Ascending aorta (tissue), 2 donors: ENCODE measurements at regions of chr4 and their contacts with region 1.

Region 1: GRCh38 chr4:82373816-82374625 is at the start of gene HNRNPD:
- DNase-seq: peak; percentile 95 to 99
- H3K4me3 ChIP-seq: peak within 1 kb of the TSS; percentile 89 to 99
- H3K27ac ChIP-seq: peak within 1 kb of the TSS; percentile 99
- H3K4me1 ChIP-seq: peaks cover 7 to 18% of the 10 kb centered on the region in 2 donors
- H3K27me3 ChIP-seq: no peaks in the 10 kb centered on the region
- CTCF ChIP-seq: no peak
- total RNA-seq, gene HNRNPD: 102 TPM

Region 2: DNA sequence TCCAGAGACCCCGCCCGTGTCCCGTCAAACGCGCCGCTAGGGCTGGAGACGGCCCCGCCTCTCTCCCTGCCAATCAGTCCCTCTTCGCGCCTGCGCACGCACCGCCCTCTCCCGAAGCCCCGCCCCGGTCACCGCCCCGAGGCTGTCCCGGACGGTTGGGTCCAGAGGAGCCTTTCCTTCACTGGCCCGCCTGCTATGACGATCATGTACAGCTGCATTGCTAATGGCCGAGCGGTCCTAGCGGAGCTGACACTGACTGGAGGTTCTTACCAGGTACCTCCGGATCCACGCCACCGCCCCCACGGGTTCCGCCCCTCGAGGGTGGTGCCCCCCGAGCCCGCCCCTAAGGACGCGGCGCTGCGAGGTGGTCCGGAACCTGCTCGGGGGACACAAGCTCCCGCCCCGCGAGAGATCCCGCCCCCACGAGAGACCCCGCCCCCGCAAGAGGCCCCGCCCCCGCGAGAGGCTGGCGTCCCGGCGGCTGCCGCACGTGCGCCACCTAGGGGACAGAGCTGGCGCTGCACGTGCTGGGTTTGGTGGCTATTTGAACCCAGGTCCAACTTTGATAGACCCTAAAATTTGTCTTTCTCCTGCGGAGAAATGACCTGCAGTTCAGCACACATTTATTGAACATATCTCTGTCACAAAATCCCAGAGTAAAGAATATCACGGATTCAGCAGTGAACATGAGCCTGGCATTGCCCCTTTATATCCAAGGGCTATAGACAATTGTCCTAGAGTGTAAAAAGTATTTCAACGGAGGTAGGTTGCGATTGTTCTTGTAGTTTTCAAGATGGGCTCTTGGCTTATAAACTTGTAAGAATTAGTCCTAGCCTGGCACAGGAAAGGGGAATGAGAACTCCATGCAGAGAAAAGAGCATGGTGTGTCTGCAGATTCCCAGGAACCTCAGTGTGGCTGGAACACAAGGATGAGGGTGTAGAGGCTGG is 88.9 kb before region 1 on chr4:
- intact Hi-C with region 1: loop called (anchors 1 kb)
- DNase-seq: peak; percentile 99 to 100
- H3K4me3 ChIP-seq: peak overlapping the region; percentile 53 to 58
- H3K27ac ChIP-seq: peak overlapping the region; percentile 58 to 66
- H3K4me1 ChIP-seq: peaks cover 0 to 5% of the 10 kb centered on the region in 2 donors
- H3K27me3 ChIP-seq: no peaks in the 10 kb centered on the region
- CTCF ChIP-seq: peak; percentile 70 to 100 (median 100)

Region 3: DNA sequence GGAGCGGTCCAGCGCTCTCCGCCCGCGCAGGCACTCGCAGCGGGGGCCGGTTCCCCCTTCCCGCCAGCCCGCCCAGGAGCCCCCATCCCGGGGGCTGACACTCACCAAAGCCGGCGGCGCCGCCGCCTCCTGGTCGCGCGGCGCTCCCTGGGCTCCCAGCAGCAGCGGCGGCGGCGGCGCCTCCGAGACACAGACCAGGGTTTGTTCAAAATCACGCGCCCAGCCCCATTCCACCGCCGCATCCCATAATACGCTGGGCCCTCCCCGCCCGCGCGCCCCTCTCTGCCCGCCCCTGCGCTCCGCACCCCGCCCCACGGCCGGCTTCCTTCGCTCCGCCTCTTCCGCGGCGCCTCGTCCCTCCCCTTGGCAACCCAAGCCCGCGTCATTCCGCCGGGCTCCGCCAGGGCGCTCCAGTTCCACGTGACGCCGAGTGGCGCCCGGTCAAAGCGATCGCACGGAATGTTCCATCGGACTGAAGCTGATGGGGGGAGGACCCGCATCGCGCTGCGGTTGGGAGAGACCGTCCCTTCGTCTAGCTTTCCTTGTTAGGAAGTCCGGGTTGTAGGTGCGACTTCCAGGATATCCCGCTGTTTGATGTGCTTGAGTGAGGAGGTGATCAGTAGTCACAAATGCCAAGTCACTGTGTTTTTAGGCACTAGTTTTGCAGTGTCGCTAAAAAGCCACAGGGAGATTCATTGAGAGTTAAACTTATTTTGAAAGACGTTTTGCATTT is 638.8 kb after region 1 on chr4:
- intact Hi-C with region 1: loop called (anchors 2 kb)
- DNase-seq: peak; percentile 75 to 97
- H3K4me3 ChIP-seq: peak overlapping the region; percentile 78 to 88
- H3K27ac ChIP-seq: peak overlapping the region; percentile 71 to 89
- H3K4me1 ChIP-seq: peaks cover 0 to 19% of the 10 kb centered on the region in 2 donors
- H3K27me3 ChIP-seq: no peaks in the 10 kb centered on the region
- CTCF ChIP-seq: peak; percentile 60 to 70 (median 63)

Region 4: GRCh38 chr4:83455281-83456129 is 1081.5 kb after region 1 on chr4 and contains the starts of genes HELQ and MRPS18C:
- intact Hi-C with region 1: loop called (anchors 5 kb)
- DNase-seq: peak; percentile 94 to 99
- H3K4me3 ChIP-seq: peak within 1 kb of the TSS; percentile 85 to 89
- H3K27ac ChIP-seq: peak within 1 kb of the TSS; percentile 98 to 99
- H3K4me1 ChIP-seq: peaks cover 0 to 14% of the 10 kb centered on the region in 2 donors
- H3K27me3 ChIP-seq: no peaks in the 10 kb centered on the region
- CTCF ChIP-seq: peak in 2 of 3 experiments; percentile 26 to 42
- total RNA-seq, gene HELQ: 1.1 TPM
- total RNA-seq, gene MRPS18C: 13.0 TPM